BJ (cell line): ENCODE measurements at regions of chr7 and their contacts with region 1.

Region 1: GRCh38 chr7:35906191-35906908 is 105.5 kb downstream of the SEPTIN7 start:
- DNase-seq: peak; percentile 25
- H3K4me3 ChIP-seq: no peak overlapping the region
- H3K27me3 ChIP-seq: no peaks in the 10 kb centered on the region
- CTCF ChIP-seq: peak; percentile 83

Region 2: GRCh38 chr7:35701287-35701900 is 205.0 kb before region 1 on chr7:
- CTCF ChIA-PET with region 1: interaction called, 35 read pairs
- POLR2A ChIA-PET with region 1: no interaction called
- DNase-seq: no peak
- H3K4me3 ChIP-seq: no peak overlapping the region
- H3K27me3 ChIP-seq: no peaks in the 10 kb centered on the region
- CTCF ChIP-seq: no peak

Region 3: DNA sequence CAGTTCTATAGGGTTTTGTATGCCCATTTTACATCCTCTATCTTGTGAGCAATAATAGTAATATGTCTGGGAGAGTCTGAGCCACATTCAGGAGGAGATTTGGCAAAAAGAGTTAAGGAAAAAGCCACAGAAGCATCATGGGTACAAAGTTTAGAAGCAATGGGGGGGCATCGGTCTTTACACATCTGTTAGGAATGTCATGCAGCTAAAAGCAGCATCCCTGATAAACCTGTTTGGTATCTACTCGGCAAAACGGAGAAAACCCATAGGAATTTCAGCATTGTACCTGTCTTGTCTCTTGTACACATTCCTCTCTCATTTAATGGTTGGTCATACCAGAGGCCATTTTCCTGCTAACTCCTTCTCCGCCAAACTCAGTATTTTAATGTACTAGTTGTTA is 198.9 kb before region 1 on chr7:
- CTCF ChIA-PET with region 1: interaction called, 35 read pairs
- POLR2A ChIA-PET with region 1: no interaction called
- DNase-seq: no peak
- H3K4me3 ChIP-seq: no peak overlapping the region
- H3K27me3 ChIP-seq: no peaks in the 10 kb centered on the region
- CTCF ChIP-seq: no peak

Region 4: DNA sequence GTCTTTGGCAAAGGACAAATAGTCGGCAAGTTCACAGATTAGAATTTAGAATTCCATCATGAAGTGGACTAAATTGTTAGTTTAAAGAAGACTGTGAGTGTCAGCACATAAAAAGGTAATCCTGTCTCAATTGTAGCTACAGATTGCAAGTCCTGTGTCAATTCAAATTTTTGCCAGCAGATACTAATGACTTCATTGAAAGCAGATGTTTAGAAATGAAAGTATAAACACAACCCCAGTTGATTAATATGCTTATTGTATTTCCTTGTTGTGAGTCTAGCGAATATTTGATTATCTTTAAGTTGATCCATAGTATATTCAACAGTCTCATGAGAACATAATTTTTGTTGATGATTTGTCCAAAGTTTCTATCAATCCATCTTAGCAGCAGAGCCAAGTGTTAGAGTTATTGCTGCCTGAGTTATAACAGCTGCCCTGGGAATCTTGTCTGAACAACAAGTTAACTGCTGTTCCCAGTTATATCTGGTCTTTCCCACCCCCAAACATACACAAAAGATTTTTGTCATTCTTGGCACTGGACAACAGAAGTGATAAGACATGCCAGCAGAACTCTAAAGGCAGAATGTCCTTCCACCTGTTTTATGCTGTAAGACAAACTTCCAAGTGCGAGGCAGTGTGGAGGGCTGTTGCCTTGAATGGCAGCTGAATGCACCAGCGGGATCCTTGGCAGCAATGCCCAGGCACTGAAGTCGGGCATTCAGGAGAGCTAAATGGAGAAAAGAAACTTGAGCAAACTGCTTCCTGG is 190.1 kb before region 1 on chr7:
- CTCF ChIA-PET with region 1: interaction called, 13 read pairs
- POLR2A ChIA-PET with region 1: no interaction called
- DNase-seq: no peak
- H3K4me3 ChIP-seq: no peak overlapping the region
- H3K27me3 ChIP-seq: peaks cover 5% of the 10 kb centered on the region
- CTCF ChIP-seq: no peak

Region 5: DNA sequence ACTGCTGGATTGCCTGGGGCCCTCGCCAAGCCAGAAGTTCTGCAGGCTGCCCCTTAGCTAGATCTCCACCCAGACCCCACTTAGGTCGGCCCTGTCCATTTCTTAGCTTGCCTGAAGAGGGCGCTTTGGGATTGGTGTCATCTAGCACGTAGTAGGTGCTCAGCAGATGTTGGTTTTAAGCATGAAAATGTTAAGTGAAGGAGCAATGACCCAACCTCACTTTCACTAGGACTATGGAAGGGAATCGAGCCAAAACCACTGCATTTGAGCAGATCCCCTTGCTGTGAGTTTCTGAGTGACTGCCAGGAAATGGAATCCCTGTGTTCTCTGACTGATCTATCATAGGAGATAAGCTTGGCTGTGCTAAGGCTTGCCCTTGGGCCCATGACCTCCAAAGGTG is 115.0 kb after region 1 on chr7:
- CTCF ChIA-PET with region 1: no interaction called
- POLR2A ChIA-PET with region 1: no interaction called
- DNase-seq: no peak
- H3K4me3 ChIP-seq: no peak overlapping the region
- H3K27me3 ChIP-seq: no peaks in the 10 kb centered on the region
- CTCF ChIP-seq: peak; percentile 48

Region 6: GRCh38 chr7:36175886-36176285 is 269.5 kb after region 1 on chr7:
- CTCF ChIA-PET with region 1: no interaction called
- POLR2A ChIA-PET with region 1: no interaction called
- DNase-seq: no peak
- H3K4me3 ChIP-seq: no peak overlapping the region
- H3K27me3 ChIP-seq: no peaks in the 10 kb centered on the region
- CTCF ChIP-seq: no peak